ENCODE measurements at regions of chr15 and their contacts with region 1.

Region 1: DNA sequence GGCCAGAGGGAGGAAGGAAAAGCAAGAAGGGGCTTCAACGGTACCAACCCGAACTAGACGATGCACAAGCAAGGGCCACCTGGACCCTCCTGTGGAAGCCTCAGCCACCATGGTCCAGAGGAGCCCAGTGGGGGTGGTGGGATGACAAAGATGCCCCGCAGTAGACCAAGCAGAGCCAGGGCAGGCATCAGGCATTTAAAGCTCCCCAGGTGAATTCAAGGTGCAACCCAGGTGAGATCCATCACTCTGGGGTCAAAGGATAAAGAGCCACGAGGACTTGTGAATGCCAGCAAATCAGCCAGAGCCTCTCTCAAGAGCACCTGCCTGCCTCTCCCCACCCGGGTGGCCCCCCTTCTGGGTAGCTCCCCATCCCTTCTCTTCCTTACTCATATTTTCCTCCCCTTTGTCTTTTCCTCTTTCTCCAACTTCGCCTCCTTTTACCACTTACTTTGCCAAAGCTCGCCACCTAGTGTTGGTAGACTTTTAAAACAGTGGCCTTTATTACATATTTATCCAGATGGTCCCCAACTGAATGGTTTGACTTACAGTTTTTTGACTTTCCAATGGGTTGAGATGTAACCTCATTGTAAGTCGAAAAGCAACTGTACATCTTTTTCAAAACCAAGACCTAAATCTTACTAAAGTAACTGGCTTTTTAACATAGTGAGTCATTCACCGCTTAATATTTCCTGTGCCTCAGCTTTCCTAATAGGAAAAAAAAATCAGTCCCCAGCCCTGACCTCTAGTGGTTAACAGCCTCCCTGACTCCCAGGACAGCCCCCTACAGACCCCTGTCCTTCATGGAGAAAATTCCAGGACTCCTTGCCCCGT is 18.8 kb downstream of the PLA2G4F start:
- DNase-seq: peak; percentile 67
- H3K27ac ChIP-seq: no peak overlapping the region
- CTCF ChIP-seq: peak; percentile 85

Region 2: DNA sequence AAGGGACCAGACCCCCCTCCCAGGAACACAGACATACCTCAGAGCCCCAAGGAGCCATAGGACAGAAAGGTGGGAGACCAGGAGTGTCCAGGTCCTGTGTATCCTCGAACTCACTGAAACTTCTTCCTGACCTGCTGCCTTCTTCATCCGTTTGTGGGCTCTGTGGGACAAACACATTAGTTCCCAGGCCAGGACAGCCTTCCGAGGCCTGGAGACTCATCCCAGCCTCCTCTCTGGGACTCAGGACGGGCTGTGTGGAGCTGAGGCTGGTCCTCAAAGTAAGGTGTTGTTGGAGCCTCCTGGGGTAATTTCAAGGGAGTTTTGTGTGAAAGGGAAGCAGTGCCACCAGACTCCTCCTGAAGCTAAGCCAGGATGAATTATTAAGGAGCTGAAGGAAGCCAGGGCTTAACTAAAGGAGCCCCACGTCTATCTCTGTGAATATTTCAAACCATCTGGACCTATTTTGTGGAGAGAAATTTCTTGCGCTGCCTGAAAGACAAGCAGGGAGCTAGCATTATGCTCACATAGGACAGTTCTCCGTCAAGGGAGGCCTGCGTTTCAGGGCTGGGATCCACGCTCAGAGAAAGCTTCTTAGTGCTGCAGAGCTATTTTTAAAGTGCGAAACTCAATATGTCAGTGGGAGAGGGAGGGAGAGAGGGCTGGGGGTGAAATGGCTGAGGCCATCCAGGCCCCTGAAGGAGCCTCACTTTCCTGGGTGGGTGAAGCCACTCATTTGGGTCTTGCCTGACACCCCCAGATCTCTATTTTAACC is 87.0 kb before region 1 on chr15:
- CTCF ChIA-PET with region 1: no interaction called
- POLR2A ChIA-PET with region 1: no interaction called
- DNase-seq: no peak
- H3K27ac ChIP-seq: no peak overlapping the region
- CTCF ChIP-seq: no peak

Region 3: DNA sequence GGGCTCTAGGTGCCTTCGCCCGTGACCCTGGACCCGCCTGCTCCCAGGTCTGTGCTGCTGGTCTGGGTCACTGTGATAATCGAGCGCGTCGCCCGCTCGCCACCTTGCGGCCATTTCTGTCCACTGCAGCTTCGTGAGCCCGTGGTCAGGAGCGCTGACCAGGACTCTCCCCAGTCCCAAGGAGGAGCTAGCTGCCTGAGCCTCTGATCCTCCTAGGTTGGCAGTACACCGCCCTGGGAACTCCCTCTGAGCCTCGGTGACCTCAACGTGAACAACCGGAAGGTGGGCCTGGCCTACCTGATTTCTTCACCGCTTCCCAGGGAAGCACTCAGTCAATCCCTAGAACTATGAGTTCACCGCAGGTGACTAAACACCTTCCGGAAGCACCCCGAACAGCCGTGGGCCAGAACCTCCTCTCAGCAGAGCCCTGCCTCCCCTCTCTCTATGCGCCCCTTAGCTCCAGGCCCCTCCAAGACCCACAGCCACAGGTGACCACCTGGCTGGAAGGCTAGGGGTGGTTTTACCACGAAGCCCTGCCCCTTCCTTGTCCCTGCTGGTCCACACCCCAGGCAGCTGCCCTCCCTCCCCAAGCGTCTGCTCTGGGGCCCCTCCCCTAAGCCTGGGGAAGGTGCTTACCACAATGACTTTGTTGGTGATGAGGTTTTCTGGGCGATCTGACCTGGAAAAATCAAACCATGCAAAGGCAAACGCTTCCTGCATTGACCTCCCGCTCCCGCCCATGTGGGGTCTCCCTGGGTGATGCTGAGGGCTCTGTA is 53.0 kb before region 1 on chr15:
- CTCF ChIA-PET with region 1: interaction called, 13 read pairs
- POLR2A ChIA-PET with region 1: no interaction called
- DNase-seq: peak; percentile 93
- H3K27ac ChIP-seq: peak overlapping the region; percentile 55
- CTCF ChIP-seq: peak; percentile 99

Region 4: DNA sequence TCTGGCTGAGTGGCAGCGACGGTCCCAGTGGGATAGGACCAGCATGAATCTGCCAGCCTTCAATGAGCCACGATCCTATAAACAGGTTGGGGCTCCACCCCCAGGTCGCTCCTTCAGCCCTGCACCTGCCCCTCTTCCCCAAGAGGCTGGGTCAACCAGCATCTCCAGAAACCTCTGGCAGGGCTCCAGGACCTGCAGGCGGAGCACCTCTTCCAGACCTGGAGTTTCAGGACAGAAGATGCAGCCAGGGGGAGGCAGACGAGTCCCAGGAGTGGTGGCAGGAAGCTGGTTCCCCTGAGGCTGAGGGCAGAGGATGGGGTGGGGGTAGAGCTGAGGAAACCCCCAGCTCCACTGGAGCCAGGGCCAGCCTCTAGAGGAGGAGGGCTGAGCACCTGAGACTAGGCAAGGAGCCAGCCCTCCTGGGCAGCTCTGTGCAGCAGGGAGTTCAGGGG is 43.1 kb before region 1 on chr15 and contains the start of gene PLA2G4D:
- CTCF ChIA-PET with region 1: interaction called, 12 read pairs
- POLR2A ChIA-PET with region 1: no interaction called
- DNase-seq: no peak
- H3K27ac ChIP-seq: peak within 1 kb of the TSS; percentile 52
- CTCF ChIP-seq: no peak